ENCODE measurements at regions of chr14 and their contacts with region 1.

Region 1: GRCh38 chr14:100155042-100155846 is 4.2 kb downstream of the DEGS2 start:
- DNase-seq: peak; percentile 62
- ATAC-seq: peak; percentile 26
- H3K4me3 Mint-ChIP-seq: no peak overlapping the region
- H3K27ac Mint-ChIP-seq: no peak overlapping the region
- H3K4me1 Mint-ChIP-seq: peaks cover 3% of the 10 kb centered on the region
- H3K27me3 Mint-ChIP-seq: peaks cover 16% of the 10 kb centered on the region
- CTCF ChIP-seq: peak; percentile 93

Region 2: GRCh38 chr14:100140452-100141078 is 14.7 kb before region 1 on chr14:
- CTCF ChIA-PET with region 1: interaction called, 17 read pairs
- POLR2A ChIA-PET with region 1: interaction called, 4 read pairs
- intact Hi-C with region 1: no loop called
- DNase-seq: no peak
- ATAC-seq: no peak
- H3K4me3 Mint-ChIP-seq: no peak overlapping the region
- H3K27ac Mint-ChIP-seq: peak overlapping the region; percentile 61
- H3K4me1 Mint-ChIP-seq: peaks cover 4% of the 10 kb centered on the region
- H3K27me3 Mint-ChIP-seq: no peaks in the 10 kb centered on the region
- CTCF ChIP-seq: no peak

Region 3: GRCh38 chr14:100165376-100165775 is 10.1 kb after region 1 on chr14:
- CTCF ChIA-PET with region 1: interaction called, 11 read pairs
- POLR2A ChIA-PET with region 1: no interaction called
- intact Hi-C with region 1: no loop called
- DNase-seq: no peak
- ATAC-seq: no peak
- H3K4me3 Mint-ChIP-seq: no peak overlapping the region
- H3K27ac Mint-ChIP-seq: no peak overlapping the region
- H3K4me1 Mint-ChIP-seq: peaks cover 10% of the 10 kb centered on the region
- H3K27me3 Mint-ChIP-seq: no peaks in the 10 kb centered on the region
- CTCF ChIP-seq: no peak

Region 4: GRCh38 chr14:100524933-100525243 is 369.6 kb after region 1 on chr14:
- CTCF ChIA-PET with region 1: no interaction called
- POLR2A ChIA-PET with region 1: no interaction called
- intact Hi-C with region 1: no loop called
- DNase-seq: peak; percentile 56
- ATAC-seq: peak; percentile 47
- H3K4me3 Mint-ChIP-seq: no peak overlapping the region
- H3K27ac Mint-ChIP-seq: no peak overlapping the region
- H3K4me1 Mint-ChIP-seq: no peaks in the 10 kb centered on the region
- H3K27me3 Mint-ChIP-seq: no peaks in the 10 kb centered on the region
- CTCF ChIP-seq: peak; percentile 55

Measured in activated CD8-positive, alpha-beta T cell treated with anti-CD3 and anti-CD28 coated beads for 36 hours (primary cell).